ENCODE measurements at regions of chr3 and their contacts with region 1.

Region 1: DNA sequence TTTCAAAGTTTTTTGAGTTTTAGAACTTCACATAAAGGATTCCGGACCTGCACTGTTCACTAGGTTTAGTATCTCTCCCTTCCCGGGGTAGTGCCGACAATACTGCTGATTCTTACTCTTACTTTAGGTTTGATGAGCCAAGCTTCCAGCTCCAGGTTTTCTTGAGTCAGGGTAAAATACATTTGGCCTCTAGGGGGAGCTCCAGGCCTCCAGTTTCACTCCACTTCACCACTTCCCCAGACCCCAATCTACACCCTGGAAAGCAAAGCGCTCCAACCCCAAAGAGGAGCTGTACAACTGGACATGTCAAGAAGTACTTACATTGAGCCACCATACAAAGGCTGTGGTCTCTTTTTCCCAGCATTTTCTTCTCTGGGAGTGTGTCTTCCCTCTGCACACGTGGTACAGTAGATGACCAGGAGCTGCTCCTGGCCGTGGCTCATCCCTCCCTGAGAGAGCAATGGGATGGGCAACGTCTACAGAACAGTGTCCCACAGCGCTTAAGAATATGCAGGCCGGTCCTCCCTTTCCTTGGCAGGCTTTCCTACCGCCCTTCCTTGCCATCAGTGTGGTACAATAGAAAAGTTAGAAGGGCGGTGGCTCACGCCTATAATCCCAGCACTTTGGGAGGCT is 93.9 kb upstream of the CCDC80 start:
- DNase-seq: peak; percentile 78
- ATAC-seq: peak; percentile 57
- H3K4me3 Mint-ChIP-seq: no peak overlapping the region
- H3K27ac Mint-ChIP-seq: no peak overlapping the region
- H3K4me1 Mint-ChIP-seq: peaks cover 48% of the 10 kb centered on the region
- H3K27me3 Mint-ChIP-seq: no peaks in the 10 kb centered on the region

Region 2: DNA sequence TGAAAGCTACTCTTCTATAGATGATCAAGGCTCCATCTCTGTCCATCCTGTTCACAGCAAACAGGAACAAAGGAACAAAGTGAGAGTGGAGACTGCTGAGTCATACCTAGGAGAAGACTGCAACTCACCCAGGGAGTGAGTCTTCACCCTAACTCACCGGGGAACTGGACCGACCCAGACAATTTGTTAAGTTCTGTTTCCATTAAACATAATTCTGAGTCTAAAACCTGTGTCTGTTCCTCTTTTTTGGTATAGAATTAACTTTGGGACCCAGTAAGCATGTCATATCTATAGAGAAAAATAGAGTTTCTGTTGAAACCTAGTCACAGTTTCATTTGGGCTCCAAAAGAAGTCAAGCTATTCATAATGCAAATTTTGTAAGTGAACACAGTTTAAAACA is 115.5 kb before region 1 on chr3:
- CTCF ChIA-PET with region 1: no interaction called
- POLR2A ChIA-PET with region 1: no interaction called
- intact Hi-C with region 1: no loop called
- DNase-seq: no peak
- ATAC-seq: peak; percentile 30
- H3K4me3 Mint-ChIP-seq: no peak overlapping the region
- H3K27ac Mint-ChIP-seq: no peak overlapping the region
- H3K4me1 Mint-ChIP-seq: no peaks in the 10 kb centered on the region
- H3K27me3 Mint-ChIP-seq: peaks cover 6% of the 10 kb centered on the region

Region 3: GRCh38 chr3:112642912-112643506 is 91.8 kb before region 1 on chr3:
- CTCF ChIA-PET with region 1: interaction called, 46 read pairs
- POLR2A ChIA-PET with region 1: no interaction called
- intact Hi-C with region 1: loop called (anchors 1 kb)
- DNase-seq: peak; percentile 90
- ATAC-seq: peak; percentile 98
- H3K4me3 Mint-ChIP-seq: peak overlapping the region; percentile 48
- H3K27ac Mint-ChIP-seq: peak overlapping the region; percentile 58
- H3K4me1 Mint-ChIP-seq: peaks cover 17% of the 10 kb centered on the region
- H3K27me3 Mint-ChIP-seq: peaks cover 3% of the 10 kb centered on the region

Region 4: GRCh38 chr3:112807685-112808084 is 72.9 kb after region 1 on chr3:
- CTCF ChIA-PET with region 1: interaction called, 10 read pairs
- POLR2A ChIA-PET with region 1: no interaction called
- intact Hi-C with region 1: no loop called
- DNase-seq: no peak
- ATAC-seq: no peak
- H3K4me3 Mint-ChIP-seq: no peak overlapping the region
- H3K27ac Mint-ChIP-seq: no peak overlapping the region
- H3K4me1 Mint-ChIP-seq: peaks cover 15% of the 10 kb centered on the region
- H3K27me3 Mint-ChIP-seq: no peaks in the 10 kb centered on the region

Region 5: DNA sequence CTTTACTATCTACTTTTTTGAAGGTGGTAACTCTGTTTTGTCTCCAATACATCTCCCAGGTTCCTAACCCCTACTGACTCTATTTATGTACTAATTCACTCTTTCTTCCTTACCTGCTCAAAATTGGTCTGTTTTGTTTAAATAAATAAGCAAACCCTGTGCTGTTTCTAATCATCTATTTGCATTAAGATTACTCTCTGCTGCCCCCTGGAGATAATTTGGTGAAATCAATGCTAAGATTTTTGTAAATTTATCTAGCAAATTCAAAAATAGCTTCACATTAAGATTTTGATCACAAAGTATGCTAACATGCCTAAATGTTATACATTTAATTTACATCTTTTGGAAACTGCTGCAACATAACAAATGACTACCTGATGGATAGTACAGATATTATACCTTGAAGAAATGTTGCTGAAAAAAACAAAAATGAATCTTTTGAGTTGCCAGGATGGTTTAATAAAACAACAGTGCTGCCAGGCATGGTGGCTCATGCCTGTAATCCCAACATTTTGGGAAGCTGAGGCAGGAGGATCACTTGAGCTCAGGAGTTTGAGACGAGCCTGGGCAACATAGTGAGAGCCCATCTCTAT is 244.5 kb after region 1 on chr3:
- CTCF ChIA-PET with region 1: interaction called, 83 read pairs
- POLR2A ChIA-PET with region 1: no interaction called
- intact Hi-C with region 1: loop called (anchors 1 kb)
- DNase-seq: no peak
- ATAC-seq: no peak
- H3K4me3 Mint-ChIP-seq: no peak overlapping the region
- H3K27ac Mint-ChIP-seq: no peak overlapping the region
- H3K4me1 Mint-ChIP-seq: peaks cover 73% of the 10 kb centered on the region
- H3K27me3 Mint-ChIP-seq: no peaks in the 10 kb centered on the region

Region 6: DNA sequence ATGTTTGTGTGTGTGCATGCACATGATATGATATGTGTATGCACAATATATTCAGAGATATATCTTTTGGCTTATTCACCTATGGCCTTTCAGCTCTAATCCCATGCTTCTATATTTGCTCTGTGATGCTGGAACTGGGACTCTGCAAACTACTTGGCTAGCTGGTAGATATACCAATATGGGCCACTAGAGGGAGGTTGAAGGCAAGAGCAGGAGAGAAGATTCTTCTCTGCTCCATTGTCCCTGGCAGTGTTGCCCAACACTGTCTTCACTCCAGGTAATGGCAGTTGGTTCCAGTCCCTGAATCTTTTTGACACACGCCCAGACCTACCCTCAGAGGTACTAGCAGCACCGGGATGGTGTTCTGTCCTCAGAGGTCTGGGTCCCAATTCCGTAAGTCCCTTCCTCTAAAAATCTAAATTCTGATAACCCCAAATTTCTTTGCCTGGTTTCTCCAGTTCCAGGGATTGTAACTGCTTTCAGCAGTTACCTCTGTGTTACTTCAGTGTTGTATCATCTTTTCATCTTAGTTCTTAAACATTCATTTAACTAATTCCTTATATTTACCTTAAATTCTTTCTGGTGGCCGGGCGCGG is 300.7 kb after region 1 on chr3:
- CTCF ChIA-PET with region 1: interaction called, 12 read pairs
- POLR2A ChIA-PET with region 1: no interaction called
- intact Hi-C with region 1: no loop called
- DNase-seq: peak; percentile 31
- ATAC-seq: peak; percentile 73
- H3K4me3 Mint-ChIP-seq: no peak overlapping the region
- H3K27ac Mint-ChIP-seq: no peak overlapping the region
- H3K4me1 Mint-ChIP-seq: no peaks in the 10 kb centered on the region
- H3K27me3 Mint-ChIP-seq: no peaks in the 10 kb centered on the region

Region 7: GRCh38 chr3:113297287-113297686 is 562.5 kb after region 1 on chr3:
- CTCF ChIA-PET with region 1: no interaction called
- POLR2A ChIA-PET with region 1: no interaction called
- intact Hi-C with region 1: no loop called
- DNase-seq: no peak
- ATAC-seq: no peak
- H3K4me3 Mint-ChIP-seq: no peak overlapping the region
- H3K27ac Mint-ChIP-seq: no peak overlapping the region
- H3K4me1 Mint-ChIP-seq: no peaks in the 10 kb centered on the region
- H3K27me3 Mint-ChIP-seq: no peaks in the 10 kb centered on the region

Measured in activated CD4-positive, alpha-beta T cell treated with anti-CD3 and anti-CD28 coated beads for 36 hours (primary cell).